B cell (primary cell): ENCODE measurements at regions of chr12 and their contacts with region 1.

Region 1: GRCh38 chr12:56189176-56189917 is at the start of gene SMARCC2:
- DNase-seq: peak; percentile 91
- ATAC-seq: peak; percentile 87
- H3K4me3 ChIP-seq: peak within 1 kb of the TSS; percentile 61 to 89 (median 85)
- H3K4me3 Mint-ChIP-seq: peak within 1 kb of the TSS; percentile 98
- H3K27ac ChIP-seq: peak within 1 kb of the TSS; percentile 75 to 86
- H3K27ac Mint-ChIP-seq: peak within 1 kb of the TSS; percentile 97
- H3K4me1 ChIP-seq: peaks cover 19 to 34% of the 10 kb centered on the region in 2 donors
- H3K4me1 Mint-ChIP-seq: peaks cover 48% of the 10 kb centered on the region
- H3K27me3 ChIP-seq: no peaks in the 10 kb centered on the region
- H3K27me3 Mint-ChIP-seq: no peaks in the 10 kb centered on the region
- CTCF ChIP-seq: peak; percentile 72
- total RNA-seq, gene SMARCC2: 195 and 198 TPM in 2 replicates

Region 2: DNA sequence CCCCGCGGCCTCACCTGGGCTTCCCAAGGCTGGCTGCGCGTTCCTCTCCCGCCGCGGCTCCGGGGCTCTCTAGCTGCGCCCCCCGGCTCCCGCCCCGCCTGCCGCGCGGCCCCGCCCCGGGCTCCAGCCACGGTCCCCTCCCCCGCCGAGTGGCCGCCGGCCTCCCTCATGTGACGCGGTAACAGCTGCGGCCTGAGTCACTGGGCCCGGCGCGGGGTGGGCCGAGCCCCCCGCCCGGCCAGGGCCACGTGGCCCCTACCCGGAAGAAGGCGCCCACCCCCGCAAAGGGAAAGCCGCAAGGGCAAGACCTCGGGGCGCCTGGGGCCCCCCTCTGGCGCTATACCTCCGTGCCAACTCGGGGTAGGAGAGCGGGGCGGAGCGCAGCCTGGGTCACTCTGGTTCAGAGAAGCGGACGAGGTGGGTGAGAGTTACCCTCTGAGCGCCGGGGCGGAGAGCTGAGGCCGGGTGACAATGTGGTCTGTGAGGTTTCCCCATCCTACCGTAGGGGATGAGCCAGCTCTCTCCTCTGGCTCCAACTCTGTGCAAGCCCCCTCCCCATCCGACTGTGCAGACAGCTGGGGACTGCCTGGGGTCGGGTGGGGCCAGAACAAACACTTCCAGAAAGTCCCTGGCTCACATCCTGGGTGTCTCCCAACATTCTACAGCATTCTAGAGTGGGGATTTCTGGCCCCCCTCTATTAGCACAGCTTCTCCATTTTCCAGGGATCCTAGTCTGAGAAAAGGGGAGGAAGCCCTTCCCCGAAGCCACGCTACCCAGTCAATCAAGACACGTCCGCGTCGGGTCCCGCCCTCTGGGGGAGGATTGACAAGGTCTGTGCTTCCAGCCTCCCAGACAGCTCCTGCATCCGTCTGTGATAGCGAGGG is 460.2 kb before region 1 on chr12 and contains the start of gene CD63:
- CTCF ChIA-PET with region 1: no interaction called
- POLR2A ChIA-PET with region 1: no interaction called
- intact Hi-C with region 1: no loop called
- DNase-seq: peak; percentile 71
- ATAC-seq: peak; percentile 67
- H3K4me3 ChIP-seq: peak within 1 kb of the TSS; percentile 55 to 91 (median 77)
- H3K4me3 Mint-ChIP-seq: peak within 1 kb of the TSS; percentile 88
- H3K27ac ChIP-seq: peak within 1 kb of the TSS; percentile 64 to 80
- H3K27ac Mint-ChIP-seq: peak within 1 kb of the TSS; percentile 92
- H3K4me1 ChIP-seq: peaks cover 21 to 36% of the 10 kb centered on the region in 2 donors
- H3K4me1 Mint-ChIP-seq: peaks cover 41% of the 10 kb centered on the region
- H3K27me3 ChIP-seq: no peaks in the 10 kb centered on the region
- H3K27me3 Mint-ChIP-seq: no peaks in the 10 kb centered on the region
- CTCF ChIP-seq: no peak
- total RNA-seq, gene CD63: 104 TPM in 2 replicates

Region 3: GRCh38 chr12:55996715-55997534 is 192.4 kb before region 1 on chr12 and contains the start of gene SUOX:
- CTCF ChIA-PET with region 1: interaction called, 4 read pairs
- POLR2A ChIA-PET with region 1: no interaction called
- intact Hi-C with region 1: loop called (anchors 2 kb)
- DNase-seq: peak; percentile 46
- ATAC-seq: peak; percentile 74
- H3K4me3 ChIP-seq: peak within 1 kb of the TSS; percentile 32 to 48 (median 41)
- H3K4me3 Mint-ChIP-seq: peak within 1 kb of the TSS; percentile 84
- H3K27ac ChIP-seq: no peak within 1 kb of the TSS
- H3K27ac Mint-ChIP-seq: peak within 1 kb of the TSS; percentile 71
- H3K4me1 ChIP-seq: peaks cover 13 to 18% of the 10 kb centered on the region in 2 donors
- H3K4me1 Mint-ChIP-seq: peaks cover 21% of the 10 kb centered on the region
- H3K27me3 ChIP-seq: peaks cover 0 to 4% (median 0%) of the 10 kb centered on the region in 4 experiments
- H3K27me3 Mint-ChIP-seq: no peaks in the 10 kb centered on the region
- CTCF ChIP-seq: no peak
- total RNA-seq, gene SUOX: 6.3 and 7.5 TPM in 2 replicates

Region 4: DNA sequence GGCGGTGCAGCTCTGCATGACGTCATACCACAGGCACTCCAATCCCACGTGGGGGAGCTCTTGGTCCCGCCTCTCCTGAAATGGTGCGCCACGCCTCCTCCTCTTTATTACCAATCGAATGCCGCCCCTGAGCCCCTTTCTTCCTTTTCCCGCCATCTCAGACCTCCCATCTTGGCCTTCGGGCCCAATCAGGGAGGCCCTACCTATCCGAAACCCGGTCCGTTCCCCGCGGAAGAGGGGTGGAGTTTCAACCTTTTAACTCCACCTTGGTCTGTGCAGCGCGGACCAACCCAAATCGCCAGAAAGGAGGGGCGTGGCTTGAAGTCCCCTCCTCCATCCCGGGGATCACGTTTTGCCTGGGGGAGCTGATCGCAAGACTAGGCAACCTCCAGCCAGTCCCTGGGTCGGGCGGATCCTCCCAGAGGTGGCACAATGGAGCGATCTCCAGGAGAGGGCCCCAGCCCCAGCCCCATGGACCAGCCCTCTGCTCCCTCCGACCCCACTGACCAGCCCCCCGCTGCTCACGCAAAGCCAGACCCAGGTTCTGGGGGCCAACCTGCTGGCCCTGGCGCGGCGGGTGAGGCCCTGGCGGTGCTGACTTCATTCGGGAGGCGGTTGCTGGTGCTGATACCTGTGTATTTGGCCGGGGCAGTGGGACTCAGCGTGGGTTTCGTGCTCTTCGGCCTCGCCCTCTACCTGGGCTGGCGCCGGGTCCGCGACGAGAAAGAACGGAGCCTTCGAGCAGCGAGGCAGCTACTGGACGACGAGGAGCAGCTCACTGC is 61.3 kb before region 1 on chr12 and contains the start of gene ESYT1:
- CTCF ChIA-PET with region 1: interaction called, 247 read pairs
- POLR2A ChIA-PET with region 1: interaction called, 35 read pairs
- intact Hi-C with region 1: loop called (anchors 1 kb)
- DNase-seq: peak; percentile 99
- ATAC-seq: peak; percentile 85
- H3K4me3 ChIP-seq: peak within 1 kb of the TSS; percentile 88 to 95 (median 92)
- H3K4me3 Mint-ChIP-seq: peak within 1 kb of the TSS; percentile 100
- H3K27ac ChIP-seq: peak within 1 kb of the TSS; percentile 76 to 80
- H3K27ac Mint-ChIP-seq: peak within 1 kb of the TSS; percentile 98
- H3K4me1 ChIP-seq: peaks cover 46 to 54% of the 10 kb centered on the region in 2 donors
- H3K4me1 Mint-ChIP-seq: peaks cover 68% of the 10 kb centered on the region
- H3K27me3 ChIP-seq: no peaks in the 10 kb centered on the region
- H3K27me3 Mint-ChIP-seq: no peaks in the 10 kb centered on the region
- CTCF ChIP-seq: no peak
- total RNA-seq, gene ESYT1: 151 and 154 TPM in 2 replicates

Region 5: DNA sequence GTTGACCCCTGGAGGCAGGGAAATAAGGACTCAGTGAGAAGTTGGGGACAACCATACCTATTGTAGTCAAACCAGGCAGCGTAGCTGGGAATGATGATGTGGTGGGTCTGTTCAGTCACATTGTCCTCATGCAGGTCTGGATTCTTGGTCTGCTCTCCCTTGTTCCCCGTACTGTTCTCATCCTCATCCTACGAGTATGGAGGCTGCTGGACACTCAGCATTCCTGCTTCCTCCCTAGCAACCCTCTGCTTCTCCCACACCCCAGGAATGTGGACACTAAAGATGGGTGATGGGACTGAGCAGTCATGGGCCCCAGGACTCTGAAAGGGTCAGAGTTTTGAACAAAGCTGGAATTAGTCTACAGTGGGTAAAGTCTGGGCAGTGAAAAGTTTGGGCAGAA is 11.0 kb before region 1 on chr12:
- CTCF ChIA-PET with region 1: interaction called, 11 read pairs
- POLR2A ChIA-PET with region 1: interaction called, 3 read pairs
- intact Hi-C with region 1: no loop called
- DNase-seq: no peak
- ATAC-seq: no peak
- H3K4me3 ChIP-seq: no peak overlapping the region
- H3K4me3 Mint-ChIP-seq: no peak overlapping the region
- H3K27ac ChIP-seq: no peak overlapping the region
- H3K27ac Mint-ChIP-seq: no peak overlapping the region
- H3K4me1 ChIP-seq: no peaks in the 10 kb centered on the region
- H3K4me1 Mint-ChIP-seq: no peaks in the 10 kb centered on the region
- H3K27me3 ChIP-seq: no peaks in the 10 kb centered on the region
- H3K27me3 Mint-ChIP-seq: no peaks in the 10 kb centered on the region
- CTCF ChIP-seq: no peak

Region 6: DNA sequence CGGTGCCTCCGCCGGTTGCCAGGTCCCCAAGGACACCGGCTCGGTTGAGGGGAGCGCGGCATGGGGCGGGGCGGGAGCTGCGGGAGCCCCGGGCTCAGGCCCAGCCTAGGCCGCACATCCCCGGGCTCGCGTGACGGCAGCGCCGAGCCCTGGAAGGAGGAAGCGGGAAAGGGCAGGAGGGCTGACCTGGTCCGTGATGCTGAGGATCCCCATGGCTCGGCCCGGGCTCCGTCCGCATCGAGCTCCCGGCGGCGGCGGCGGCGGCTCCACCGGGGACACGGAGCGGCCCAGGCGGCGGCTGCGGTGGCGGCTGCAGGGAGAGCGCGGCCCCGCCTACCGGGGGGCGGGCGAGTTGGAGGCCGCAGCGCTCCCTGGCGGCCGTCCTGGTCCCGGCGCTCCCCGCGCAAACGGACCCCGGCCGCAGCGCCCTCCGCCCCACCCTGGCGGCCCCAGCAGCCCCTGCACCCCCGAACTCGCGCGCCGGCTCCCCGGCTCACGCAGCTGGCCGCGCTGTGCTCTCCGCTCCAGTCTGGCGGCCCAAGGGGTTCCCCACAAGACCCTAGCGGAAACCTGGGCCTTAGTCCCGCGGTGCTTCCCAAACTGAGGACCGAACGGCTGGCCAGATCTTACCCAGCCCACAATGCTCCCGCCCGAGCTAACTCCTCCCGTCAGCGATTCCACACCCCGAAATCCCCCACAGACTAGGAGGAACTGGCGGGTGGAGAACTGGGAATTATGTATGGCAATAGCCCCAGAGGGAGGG is 68.9 kb after region 1 on chr12 and contains the start of gene ANKRD52:
- CTCF ChIA-PET with region 1: interaction called, 12 read pairs
- POLR2A ChIA-PET with region 1: no interaction called
- intact Hi-C with region 1: loop called (anchors 1 kb)
- DNase-seq: peak; percentile 93
- ATAC-seq: peak; percentile 95
- H3K4me3 ChIP-seq: peak within 1 kb of the TSS; percentile 32 to 99 (median 77)
- H3K4me3 Mint-ChIP-seq: peak within 1 kb of the TSS; percentile 90
- H3K27ac ChIP-seq: peak within 1 kb of the TSS; percentile 60 to 81
- H3K27ac Mint-ChIP-seq: peak within 1 kb of the TSS; percentile 92
- H3K4me1 ChIP-seq: peaks cover 16 to 21% of the 10 kb centered on the region in 2 donors
- H3K4me1 Mint-ChIP-seq: peaks cover 18% of the 10 kb centered on the region
- H3K27me3 ChIP-seq: no peaks in the 10 kb centered on the region
- H3K27me3 Mint-ChIP-seq: no peaks in the 10 kb centered on the region
- CTCF ChIP-seq: peak; percentile 78
- total RNA-seq, gene ANKRD52: 46.5 and 54.6 TPM in 2 replicates

Region 7: DNA sequence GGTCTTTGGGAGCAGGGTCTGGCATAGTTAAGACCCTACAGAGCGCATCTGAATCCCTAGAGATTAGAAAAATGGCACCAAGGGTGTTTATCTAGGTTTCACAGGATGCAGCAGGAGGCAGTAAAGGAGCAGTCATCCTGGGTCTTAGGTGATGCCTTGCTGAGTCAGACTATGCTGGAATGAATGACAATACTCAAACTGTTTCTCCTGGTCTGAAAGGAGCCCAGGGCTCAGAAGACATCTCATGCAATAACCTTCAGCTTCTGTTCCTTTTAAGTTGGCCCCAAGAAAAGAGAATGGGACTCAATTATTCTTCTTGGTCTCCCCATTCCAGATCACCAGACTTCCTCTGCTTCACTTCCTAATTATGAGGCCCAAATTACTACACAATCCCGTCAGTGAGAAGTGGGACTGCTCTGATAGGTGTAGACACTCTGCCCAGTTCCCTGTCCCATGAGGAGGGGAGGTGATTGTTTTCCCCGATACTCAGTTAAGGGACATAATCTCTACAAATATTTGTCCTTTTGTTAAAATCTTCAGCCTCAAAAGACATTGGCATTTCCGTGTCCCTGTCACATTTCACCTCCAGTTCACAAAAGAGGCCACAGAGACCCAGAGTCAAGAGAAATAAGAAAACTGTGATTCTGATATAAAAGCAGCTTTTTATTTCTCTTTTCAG is 188.1 kb after region 1 on chr12:
- CTCF ChIA-PET with region 1: interaction called, 3 read pairs
- POLR2A ChIA-PET with region 1: interaction called, 10 read pairs
- intact Hi-C with region 1: no loop called
- DNase-seq: no peak
- ATAC-seq: no peak
- H3K4me3 ChIP-seq: no peak overlapping the region
- H3K4me3 Mint-ChIP-seq: peak overlapping the region; percentile 76
- H3K27ac ChIP-seq: peak overlapping the region; percentile 75 to 80
- H3K27ac Mint-ChIP-seq: peak overlapping the region; percentile 96
- H3K4me1 ChIP-seq: peaks cover 49 to 64% of the 10 kb centered on the region in 2 donors
- H3K4me1 Mint-ChIP-seq: peaks cover 47% of the 10 kb centered on the region
- H3K27me3 ChIP-seq: no peaks in the 10 kb centered on the region
- H3K27me3 Mint-ChIP-seq: no peaks in the 10 kb centered on the region
- CTCF ChIP-seq: no peak

Region 8: GRCh38 chr12:56468216-56469006 is 279.1 kb after region 1 on chr12 and contains the start of gene SPRYD4:
- CTCF ChIA-PET with region 1: interaction called, 16 read pairs
- POLR2A ChIA-PET with region 1: no interaction called
- intact Hi-C with region 1: loop called (anchors 1 kb)
- DNase-seq: peak; percentile 97
- ATAC-seq: peak; percentile 93
- H3K4me3 ChIP-seq: peak within 1 kb of the TSS; percentile 91 to 100 (median 96)
- H3K4me3 Mint-ChIP-seq: peak within 1 kb of the TSS; percentile 93
- H3K27ac ChIP-seq: peak within 1 kb of the TSS; percentile 86 to 87
- H3K27ac Mint-ChIP-seq: peak within 1 kb of the TSS; percentile 98
- H3K4me1 ChIP-seq: peaks cover 12 to 28% of the 10 kb centered on the region in 2 donors
- H3K4me1 Mint-ChIP-seq: peaks cover 28% of the 10 kb centered on the region
- H3K27me3 ChIP-seq: no peaks in the 10 kb centered on the region
- H3K27me3 Mint-ChIP-seq: no peaks in the 10 kb centered on the region
- CTCF ChIP-seq: peak; percentile 30
- total RNA-seq, gene SPRYD4: 7.4 and 8.0 TPM in 2 replicates